Caco-2 (cell line): ENCODE measurements at regions of chr12 and their contacts with region 1.

Region 1: DNA sequence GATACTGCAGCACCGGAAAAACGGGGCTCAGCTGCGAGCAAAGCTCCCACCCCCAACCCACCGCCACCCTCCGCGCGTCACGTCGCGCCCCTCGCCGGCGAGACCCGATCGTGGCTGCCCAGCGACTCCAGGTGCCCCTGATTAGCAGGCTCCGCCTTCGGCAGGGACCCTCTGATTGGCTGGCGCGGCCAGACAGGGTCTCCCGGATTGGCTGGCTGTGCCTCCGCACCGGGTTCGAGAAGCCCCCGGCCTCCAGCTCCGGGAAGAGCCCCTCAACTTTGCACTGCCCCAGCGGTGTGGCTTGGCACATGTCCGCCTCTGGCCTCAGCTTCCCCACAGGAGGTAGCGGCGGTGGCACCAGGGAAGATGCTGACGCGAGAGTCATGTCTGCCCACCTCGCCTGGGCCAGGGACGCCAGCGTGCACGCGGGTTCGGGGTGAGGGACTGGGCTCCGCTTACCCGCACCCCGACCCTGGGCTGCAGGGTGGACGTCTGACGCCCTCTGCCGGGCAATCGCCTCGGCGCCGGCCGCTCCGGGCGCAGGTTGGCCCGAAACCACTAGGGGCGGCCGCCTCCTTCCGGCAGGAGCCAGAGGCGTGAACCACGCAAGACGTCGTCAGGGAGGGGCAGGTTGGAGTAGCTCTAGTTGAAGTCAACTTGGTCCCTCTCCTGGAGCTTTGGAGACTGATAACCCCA is 498 bp upstream of the RHOF start:
- DNase-seq: peak; percentile 91 to 96
- H3K4me3 ChIP-seq: peak overlapping the region; percentile 82
- H3K4me3 Mint-ChIP-seq: peak overlapping the region; percentile 74
- H3K27ac Mint-ChIP-seq: peak overlapping the region; percentile 96
- H3K4me1 ChIP-seq: peaks cover 59% of the 10 kb centered on the region
- H3K4me1 Mint-ChIP-seq: peaks cover 33% of the 10 kb centered on the region
- H3K27me3 ChIP-seq: no peaks in the 10 kb centered on the region
- H3K27me3 Mint-ChIP-seq: no peaks in the 10 kb centered on the region
- CTCF ChIP-seq: peak; percentile 96 to 100

Region 2: GRCh38 chr12:121536899-121537813 is 256.8 kb before region 1 on chr12:
- CTCF ChIA-PET with region 1: interaction called, 12 read pairs
- POLR2A ChIA-PET with region 1: no interaction called
- intact Hi-C with region 1: no loop called
- DNase-seq: peak; percentile 79 to 85
- H3K4me3 ChIP-seq: peak overlapping the region; percentile 65
- H3K4me3 Mint-ChIP-seq: peak overlapping the region; percentile 70
- H3K27ac Mint-ChIP-seq: peak overlapping the region; percentile 45
- H3K4me1 ChIP-seq: peaks cover 21% of the 10 kb centered on the region
- H3K4me1 Mint-ChIP-seq: peaks cover 17% of the 10 kb centered on the region
- H3K27me3 ChIP-seq: no peaks in the 10 kb centered on the region
- H3K27me3 Mint-ChIP-seq: no peaks in the 10 kb centered on the region
- CTCF ChIP-seq: no peak

Region 3: GRCh38 chr12:121688966-121689365 is 105.0 kb before region 1 on chr12:
- CTCF ChIA-PET with region 1: interaction called, 22 read pairs
- POLR2A ChIA-PET with region 1: interaction called, 4 read pairs
- intact Hi-C with region 1: no loop called
- DNase-seq: no peak
- H3K4me3 ChIP-seq: no peak overlapping the region
- H3K4me3 Mint-ChIP-seq: no peak overlapping the region
- H3K27ac Mint-ChIP-seq: no peak overlapping the region
- H3K4me1 ChIP-seq: no peaks in the 10 kb centered on the region
- H3K4me1 Mint-ChIP-seq: no peaks in the 10 kb centered on the region
- H3K27me3 ChIP-seq: no peaks in the 10 kb centered on the region
- H3K27me3 Mint-ChIP-seq: no peaks in the 10 kb centered on the region
- CTCF ChIP-seq: no peak

Region 4: GRCh38 chr12:121712461-121713256 is 81.3 kb before region 1 on chr12 and contains the start of gene TMEM120B:
- CTCF ChIA-PET with region 1: interaction called, 11 read pairs
- POLR2A ChIA-PET with region 1: interaction called, 4 read pairs
- intact Hi-C with region 1: no loop called
- DNase-seq: peak; percentile 78 to 89
- H3K4me3 ChIP-seq: peak within 1 kb of the TSS; percentile 98
- H3K4me3 Mint-ChIP-seq: peak within 1 kb of the TSS; percentile 81
- H3K27ac Mint-ChIP-seq: peak within 1 kb of the TSS; percentile 94
- H3K4me1 ChIP-seq: peaks cover 35% of the 10 kb centered on the region
- H3K4me1 Mint-ChIP-seq: peaks cover 17% of the 10 kb centered on the region
- H3K27me3 ChIP-seq: no peaks in the 10 kb centered on the region
- H3K27me3 Mint-ChIP-seq: no peaks in the 10 kb centered on the region
- CTCF ChIP-seq: peak; percentile 13 to 31
- total RNA-seq, gene TMEM120B: 15.5 and 15.9 TPM in 2 replicates

Region 5: DNA sequence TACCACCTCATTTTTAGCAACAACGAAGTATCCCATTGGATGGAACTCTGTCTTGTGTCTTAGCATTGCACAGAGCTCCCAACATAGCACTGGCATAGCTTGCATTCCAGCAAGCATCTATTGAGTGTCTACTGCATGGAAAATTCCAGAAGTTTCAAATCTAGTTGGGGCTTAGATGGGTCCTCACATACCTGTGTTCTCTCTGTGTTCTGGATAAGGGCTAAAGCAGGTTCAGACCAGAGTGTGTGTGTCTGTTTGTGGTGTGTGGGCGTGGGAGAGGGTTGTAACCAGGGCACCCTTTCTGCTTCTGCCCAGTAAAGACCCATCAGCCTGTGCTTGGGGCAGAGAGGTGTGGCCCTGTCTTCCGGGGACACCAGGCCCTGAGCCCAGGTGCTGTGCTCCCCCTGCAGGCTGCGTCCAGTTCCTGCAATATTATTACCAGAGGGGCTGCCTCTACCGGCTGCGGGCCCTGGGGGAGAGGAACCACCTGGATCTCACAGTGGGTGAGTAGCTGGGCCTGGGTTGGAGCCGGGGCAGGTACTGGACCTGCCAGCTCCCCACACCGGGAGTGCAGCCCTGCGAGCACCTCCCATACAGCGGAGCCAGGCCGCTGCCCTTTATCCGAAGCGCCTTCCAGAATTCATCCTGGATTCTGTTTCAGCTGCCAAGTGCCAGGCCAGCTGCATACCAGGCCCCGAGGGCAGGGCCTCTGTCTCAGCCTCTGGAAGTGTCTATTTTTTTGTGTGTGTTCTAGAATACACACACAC is 20.8 kb before region 1 on chr12:
- CTCF ChIA-PET with region 1: interaction called, 53 read pairs
- POLR2A ChIA-PET with region 1: no interaction called
- intact Hi-C with region 1: loop called (anchors 1 kb)
- DNase-seq: peak; percentile 81 to 86
- H3K4me3 ChIP-seq: no peak overlapping the region
- H3K4me3 Mint-ChIP-seq: no peak overlapping the region
- H3K27ac Mint-ChIP-seq: peak overlapping the region; percentile 25
- H3K4me1 ChIP-seq: peaks cover 20% of the 10 kb centered on the region
- H3K4me1 Mint-ChIP-seq: peaks cover 11% of the 10 kb centered on the region
- H3K27me3 ChIP-seq: no peaks in the 10 kb centered on the region
- H3K27me3 Mint-ChIP-seq: no peaks in the 10 kb centered on the region
- CTCF ChIP-seq: peak; percentile 89 to 90

Region 6: GRCh38 chr12:121811434-121812319 is 17.7 kb after region 1 on chr12:
- CTCF ChIA-PET with region 1: interaction called, 145 read pairs
- POLR2A ChIA-PET with region 1: interaction called, 17 read pairs
- intact Hi-C with region 1: loop called (anchors 1 kb)
- DNase-seq: peak; percentile 59 to 84
- H3K4me3 ChIP-seq: peak overlapping the region; percentile 33
- H3K4me3 Mint-ChIP-seq: peak overlapping the region; percentile 73
- H3K27ac Mint-ChIP-seq: peak overlapping the region; percentile 42
- H3K4me1 ChIP-seq: peaks cover 15% of the 10 kb centered on the region
- H3K4me1 Mint-ChIP-seq: peaks cover 6% of the 10 kb centered on the region
- H3K27me3 ChIP-seq: no peaks in the 10 kb centered on the region
- H3K27me3 Mint-ChIP-seq: no peaks in the 10 kb centered on the region
- CTCF ChIP-seq: peak; percentile 72 to 97

Region 7: GRCh38 chr12:121888478-121889266 is 94.7 kb after region 1 on chr12 and contains the start of gene PSMD9:
- CTCF ChIA-PET with region 1: interaction called, 46 read pairs
- POLR2A ChIA-PET with region 1: interaction called, 4 read pairs
- intact Hi-C with region 1: loop called (anchors 1 kb)
- DNase-seq: peak; percentile 98 to 99
- H3K4me3 ChIP-seq: peak within 1 kb of the TSS; percentile 84
- H3K4me3 Mint-ChIP-seq: peak within 1 kb of the TSS; percentile 84
- H3K27ac Mint-ChIP-seq: peak within 1 kb of the TSS; percentile 86
- H3K4me1 ChIP-seq: peaks cover 10% of the 10 kb centered on the region
- H3K4me1 Mint-ChIP-seq: peaks cover 15% of the 10 kb centered on the region
- H3K27me3 ChIP-seq: no peaks in the 10 kb centered on the region
- H3K27me3 Mint-ChIP-seq: no peaks in the 10 kb centered on the region
- CTCF ChIP-seq: peak; percentile 50 to 78
- total RNA-seq, gene PSMD9: 53.0 and 63.3 TPM in 2 replicates